ENCODE measurements at regions of chr1 and their contacts with region 1.

Region 1: GRCh38 chr1:208132287-208132883 is 111.8 kb downstream of the PLXNA2 start:
- DNase-seq: peak; percentile 86
- H3K4me3 ChIP-seq: no peak overlapping the region
- H3K27ac ChIP-seq: peak overlapping the region in 3 of 4 donors; percentile 1 to 30 (median 14)
- H3K4me1 ChIP-seq: peaks cover 0 to 43% (median 24%) of the 10 kb centered on the region in 4 donors
- H3K27me3 ChIP-seq: no peaks in the 10 kb centered on the region
- CTCF ChIP-seq: peak; percentile 54 to 84 (median 80)
- EP300 ChIP-seq: no peak
- POLR2A ChIP-seq: no peak

Region 2: GRCh38 chr1:207997486-207998268 is 134.7 kb before region 1 on chr1:
- intact Hi-C with region 1: no loop called
- DNase-seq: peak; percentile 91
- H3K4me3 ChIP-seq: no peak overlapping the region
- H3K27ac ChIP-seq: no peak overlapping the region
- H3K4me1 ChIP-seq: peaks cover 0 to 4% (median 2%) of the 10 kb centered on the region in 4 donors
- H3K27me3 ChIP-seq: no peaks in the 10 kb centered on the region
- CTCF ChIP-seq: peak in 3 of 4 experiments; percentile 64 to 80 (median 65)
- EP300 ChIP-seq: no peak
- POLR2A ChIP-seq: no peak

Region 3: DNA sequence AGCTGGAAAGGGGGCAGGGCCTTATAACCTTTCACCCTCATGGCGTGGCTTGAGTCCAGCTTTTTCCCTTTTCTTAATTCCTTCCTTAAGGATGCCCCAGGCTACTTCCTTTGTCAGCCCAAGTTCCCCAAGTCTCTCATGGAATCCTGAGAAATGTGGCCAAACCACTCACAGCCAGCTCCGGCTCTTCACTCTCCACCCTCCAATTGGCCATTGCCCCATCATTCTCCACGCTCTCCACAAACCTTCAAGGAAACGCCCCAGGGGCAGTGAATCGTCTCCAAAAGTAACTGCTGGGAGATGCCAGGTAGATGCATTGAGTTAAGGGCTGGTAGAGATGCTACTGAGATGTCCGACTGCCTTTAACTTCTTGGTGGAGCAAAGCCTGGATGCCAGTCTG is 108.0 kb before region 1 on chr1:
- intact Hi-C with region 1: loop called (anchors 5 kb)
- DNase-seq: no peak
- H3K4me3 ChIP-seq: no peak overlapping the region
- H3K27ac ChIP-seq: no peak overlapping the region
- H3K4me1 ChIP-seq: peaks cover 0 to 7% (median 7%) of the 10 kb centered on the region in 4 donors
- H3K27me3 ChIP-seq: no peaks in the 10 kb centered on the region
- CTCF ChIP-seq: no peak
- EP300 ChIP-seq: no peak
- POLR2A ChIP-seq: no peak

Region 4: DNA sequence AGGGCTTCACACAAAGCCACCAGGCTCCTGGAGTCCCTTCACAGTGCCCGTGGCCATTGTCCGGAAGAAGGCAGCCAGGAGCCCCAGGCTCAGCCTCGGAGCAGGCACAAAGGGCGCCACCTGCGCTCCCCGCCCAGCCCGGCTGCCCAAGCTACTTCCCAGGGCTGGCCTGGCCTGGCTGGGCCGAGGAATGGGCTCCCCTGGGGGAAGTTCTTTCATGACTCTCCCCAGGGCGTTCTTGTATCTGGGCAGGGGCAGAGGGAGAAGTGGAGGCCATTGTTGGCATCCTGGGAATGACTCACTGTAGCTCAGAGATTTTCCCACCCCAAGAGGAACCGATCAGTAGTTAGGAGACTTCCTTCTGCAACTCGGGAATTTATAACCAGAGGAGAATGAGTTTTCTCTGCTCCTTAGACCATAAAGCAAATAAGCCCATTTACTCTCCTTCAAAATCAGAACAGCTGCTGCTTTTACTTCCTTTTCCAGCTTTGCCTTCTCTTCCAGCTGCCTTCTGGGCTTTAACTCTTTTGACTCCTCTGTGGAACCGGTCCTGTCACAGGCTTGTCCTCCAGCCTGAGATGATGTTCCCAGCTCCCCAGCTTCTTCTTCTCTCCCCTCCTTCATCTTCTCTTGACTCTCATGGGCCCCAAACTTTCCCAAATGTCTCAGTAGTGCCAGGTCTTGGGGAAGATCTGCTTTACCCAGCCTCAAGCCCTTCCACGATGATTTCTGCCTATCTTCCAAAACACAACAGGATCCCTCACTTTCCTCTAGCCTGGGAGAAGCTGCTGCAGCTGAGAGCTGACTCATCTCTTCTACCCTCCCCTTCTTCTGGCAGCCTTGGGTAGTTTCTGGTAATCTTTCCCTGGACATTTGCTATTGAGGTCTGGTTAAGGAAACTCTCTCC is 102.8 kb before region 1 on chr1:
- intact Hi-C with region 1: loop called (anchors 5 kb)
- DNase-seq: no peak
- H3K4me3 ChIP-seq: no peak overlapping the region
- H3K27ac ChIP-seq: peak overlapping the region; percentile 67 to 75 (median 69)
- H3K4me1 ChIP-seq: peaks cover 0 to 32% (median 28%) of the 10 kb centered on the region in 4 donors
- H3K27me3 ChIP-seq: no peaks in the 10 kb centered on the region
- CTCF ChIP-seq: no peak
- EP300 ChIP-seq: no peak
- POLR2A ChIP-seq: no peak

Region 5: GRCh38 chr1:208159555-208160258 is 27.3 kb after region 1 on chr1:
- intact Hi-C with region 1: no loop called
- DNase-seq: peak; percentile 75
- H3K4me3 ChIP-seq: no peak overlapping the region
- H3K27ac ChIP-seq: peak overlapping the region; percentile 76 to 82 (median 80)
- H3K4me1 ChIP-seq: peaks cover 0 to 92% (median 72%) of the 10 kb centered on the region in 4 donors
- H3K27me3 ChIP-seq: no peaks in the 10 kb centered on the region
- CTCF ChIP-seq: no peak
- EP300 ChIP-seq: no peak
- POLR2A ChIP-seq: no peak

Region 6: DNA sequence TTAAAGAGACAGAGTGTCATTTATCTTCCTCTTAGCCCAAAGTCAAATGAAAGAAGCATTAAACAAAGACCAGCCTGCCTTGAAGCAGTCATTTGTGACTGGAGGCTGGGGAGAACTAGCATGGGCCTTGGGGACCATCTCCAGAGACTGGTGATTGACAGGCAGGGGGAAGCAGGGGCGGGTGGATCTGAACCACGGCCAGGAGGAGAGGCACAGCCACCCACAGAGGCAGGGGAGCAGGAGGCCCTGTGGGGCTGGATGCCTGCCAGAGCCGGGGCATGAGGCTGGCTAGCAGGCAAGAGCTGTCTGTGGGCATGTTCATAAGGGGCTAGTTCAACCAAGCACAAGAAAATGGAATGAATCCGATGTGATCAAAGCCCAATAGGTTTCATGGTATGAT is 37.9 kb after region 1 on chr1:
- intact Hi-C with region 1: loop called (anchors 5 kb)
- DNase-seq: no peak
- H3K4me3 ChIP-seq: no peak overlapping the region
- H3K27ac ChIP-seq: no peak overlapping the region
- H3K4me1 ChIP-seq: peaks cover 0 to 30% (median 16%) of the 10 kb centered on the region in 4 donors
- H3K27me3 ChIP-seq: no peaks in the 10 kb centered on the region
- CTCF ChIP-seq: no peak
- EP300 ChIP-seq: no peak
- POLR2A ChIP-seq: no peak

Region 7: DNA sequence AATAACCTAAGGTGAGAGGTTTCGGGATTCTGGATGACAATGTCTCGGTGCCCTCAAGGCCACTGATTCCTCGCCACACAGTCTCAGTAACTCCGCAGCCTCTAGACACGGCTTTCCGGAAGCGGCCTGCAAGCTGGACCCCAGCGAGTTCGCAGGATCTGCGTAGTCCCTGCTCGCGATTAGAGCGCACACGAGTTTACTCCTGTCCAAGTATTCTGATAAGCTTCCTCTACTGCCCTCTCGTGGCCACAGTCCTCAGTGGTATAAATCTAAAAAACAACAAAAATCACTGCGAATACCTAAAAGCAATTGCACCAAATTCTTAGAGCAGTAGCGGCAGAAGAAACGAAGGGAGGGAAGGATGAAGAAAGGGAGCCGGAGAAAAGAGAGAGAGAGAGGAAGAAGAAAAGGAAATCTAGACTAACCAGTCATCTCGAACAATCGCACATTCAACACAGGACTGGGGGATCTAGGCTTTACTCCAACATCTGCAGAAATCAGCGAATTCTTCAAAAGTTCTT is 112.9 kb after region 1 on chr1:
- intact Hi-C with region 1: loop called (anchors 2 kb)
- DNase-seq: peak; percentile 96
- H3K4me3 ChIP-seq: peak overlapping the region in 3 of 4 donors; percentile 83 to 91 (median 84)
- H3K27ac ChIP-seq: peak overlapping the region; percentile 83 to 91 (median 88)
- H3K4me1 ChIP-seq: peaks cover 0 to 37% (median 33%) of the 10 kb centered on the region in 4 donors
- H3K27me3 ChIP-seq: no peaks in the 10 kb centered on the region
- CTCF ChIP-seq: peak; percentile 81 to 88 (median 84)
- EP300 ChIP-seq: no peak
- POLR2A ChIP-seq: no peak

Region 8: DNA sequence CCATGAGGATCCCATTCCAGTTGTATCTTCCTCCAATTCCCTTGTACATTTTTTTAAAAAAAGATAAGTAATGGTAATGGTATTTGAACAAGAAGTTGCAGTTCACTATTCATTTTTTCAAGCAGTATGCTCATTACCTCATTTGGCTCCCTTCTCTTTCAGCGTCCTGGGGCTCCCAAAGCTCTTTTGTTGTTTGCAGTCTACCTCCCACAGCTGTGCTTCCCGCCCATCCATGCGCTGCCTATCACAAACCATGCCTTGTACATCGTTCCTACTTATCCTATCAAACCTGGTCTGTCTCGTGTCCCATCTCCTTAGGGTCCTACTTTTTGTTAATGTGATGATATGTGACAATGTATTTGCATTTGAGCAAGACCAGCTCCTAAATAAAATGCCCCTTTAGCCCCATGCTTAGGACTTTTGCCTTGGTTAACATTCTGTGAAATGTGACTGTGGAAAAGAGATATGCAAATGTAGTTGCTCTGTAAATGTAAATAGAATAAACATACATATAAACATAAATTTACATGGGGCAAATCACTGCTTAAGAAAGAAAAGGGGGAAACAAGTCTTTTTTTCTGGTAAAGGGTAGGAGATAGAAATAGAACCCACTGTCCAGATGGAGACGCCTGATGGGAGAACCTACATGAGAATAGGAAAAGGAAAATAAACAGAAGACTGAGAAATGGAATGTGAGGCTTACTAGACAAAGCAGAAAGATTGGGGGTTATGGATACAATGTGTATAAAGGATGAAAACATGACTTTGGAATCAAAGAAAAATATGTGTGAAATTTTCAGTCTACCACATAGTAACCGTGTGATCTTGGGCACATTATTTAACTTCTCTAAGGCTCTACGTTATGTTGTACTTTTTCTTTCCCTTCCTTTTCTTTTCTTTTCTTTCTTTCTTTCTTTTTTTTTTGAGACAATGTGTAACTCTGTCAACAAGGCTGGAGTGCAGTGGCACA is 171.6 kb after region 1 on chr1:
- intact Hi-C with region 1: no loop called
- DNase-seq: no peak
- H3K4me3 ChIP-seq: no peak overlapping the region
- H3K27ac ChIP-seq: no peak overlapping the region
- H3K4me1 ChIP-seq: peaks cover 0 to under 1% (median 0%) of the 10 kb centered on the region in 4 donors
- H3K27me3 ChIP-seq: no peaks in the 10 kb centered on the region
- CTCF ChIP-seq: no peak
- EP300 ChIP-seq: no peak
- POLR2A ChIP-seq: no peak

Measured in sigmoid colon (tissue), 7 donors.